Activated CD8-positive, alpha-beta T cell treated with anti-CD3 and anti-CD28 coated beads for 36 hours (primary cell): ENCODE measurements at regions of chr2 and their contacts with region 1.

Region 1: GRCh38 chr2:27663463-27664249 is at the starts of genes SLC4A1AP and SUPT7L:
- DNase-seq: peak; percentile 81
- ATAC-seq: peak; percentile 82
- H3K4me3 Mint-ChIP-seq: peak within 1 kb of the TSS; percentile 93
- H3K27ac Mint-ChIP-seq: peak within 1 kb of the TSS; percentile 100
- H3K4me1 Mint-ChIP-seq: peaks cover 50% of the 10 kb centered on the region
- H3K27me3 Mint-ChIP-seq: no peaks in the 10 kb centered on the region
- CTCF ChIP-seq: no peak
- total RNA-seq, gene SLC4A1AP: 19.1 to 19.3 TPM
- total RNA-seq, gene SUPT7L: 21.8 to 22.6 TPM

Region 2: DNA sequence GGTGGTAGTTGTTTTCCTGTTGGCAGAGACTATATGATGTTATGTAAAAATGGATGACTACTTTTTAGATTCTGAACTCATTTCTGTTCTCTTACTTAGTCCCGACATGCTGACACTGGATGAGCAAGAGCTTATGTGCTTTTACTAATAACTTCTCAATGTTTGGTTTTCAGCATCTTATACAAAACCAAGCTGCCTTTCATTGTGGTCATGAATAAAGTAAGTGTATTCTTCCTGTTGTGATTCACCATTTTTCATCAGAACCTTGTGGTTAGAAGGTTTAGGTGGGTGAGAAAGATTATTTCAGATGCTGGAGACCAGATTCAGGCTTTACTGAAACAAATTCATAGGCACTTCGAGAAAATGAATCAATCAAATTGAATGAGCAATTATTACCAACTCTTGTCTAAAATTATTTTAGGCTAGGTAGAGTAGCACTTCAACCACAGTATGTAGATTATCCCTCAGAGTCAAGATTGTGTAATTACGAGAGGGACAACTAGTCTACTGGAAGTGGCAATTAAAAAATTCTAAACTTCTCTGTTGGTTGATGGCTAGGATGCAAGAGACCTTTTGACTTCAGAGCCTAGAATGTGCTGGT is 25.5 kb before region 1 on chr2:
- CTCF ChIA-PET with region 1: no interaction called
- POLR2A ChIA-PET with region 1: interaction called, 13 read pairs
- intact Hi-C with region 1: no loop called
- DNase-seq: peak; percentile 33
- ATAC-seq: peak; percentile 89
- H3K4me3 Mint-ChIP-seq: peak overlapping the region; percentile 9
- H3K27ac Mint-ChIP-seq: peak overlapping the region; percentile 94
- H3K4me1 Mint-ChIP-seq: peaks cover 34% of the 10 kb centered on the region
- H3K27me3 Mint-ChIP-seq: no peaks in the 10 kb centered on the region
- CTCF ChIP-seq: no peak

Region 3: DNA sequence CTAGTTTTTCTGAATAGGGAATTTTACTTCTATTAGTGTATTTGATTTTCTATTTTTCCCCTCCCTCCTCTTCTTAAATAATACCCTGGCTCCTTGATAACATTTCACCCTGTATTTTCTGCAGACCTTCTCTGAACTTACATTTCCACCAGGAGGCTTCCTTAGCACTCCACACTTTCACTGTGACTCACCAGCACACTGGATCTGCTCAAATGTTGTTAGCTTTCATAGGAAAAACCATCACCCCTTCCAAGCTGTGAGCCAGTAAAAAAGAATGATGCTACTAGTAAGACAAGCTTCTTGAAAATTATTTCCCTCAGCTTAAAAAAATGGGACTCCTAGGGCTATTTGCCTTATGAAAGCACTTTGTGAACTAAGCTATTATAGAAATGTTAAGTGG is 16.4 kb before region 1 on chr2:
- CTCF ChIA-PET with region 1: interaction called, 5 read pairs
- POLR2A ChIA-PET with region 1: interaction called, 13 read pairs
- intact Hi-C with region 1: no loop called
- DNase-seq: no peak
- ATAC-seq: no peak
- H3K4me3 Mint-ChIP-seq: no peak overlapping the region
- H3K27ac Mint-ChIP-seq: no peak overlapping the region
- H3K4me1 Mint-ChIP-seq: no peaks in the 10 kb centered on the region
- H3K27me3 Mint-ChIP-seq: no peaks in the 10 kb centered on the region
- CTCF ChIP-seq: no peak

Region 4: GRCh38 chr2:27720004-27720551 is 56.4 kb after region 1 on chr2:
- CTCF ChIA-PET with region 1: no interaction called
- POLR2A ChIA-PET with region 1: no interaction called
- intact Hi-C with region 1: no loop called
- DNase-seq: peak; percentile 80
- ATAC-seq: peak; percentile 91
- H3K4me3 Mint-ChIP-seq: no peak overlapping the region
- H3K27ac Mint-ChIP-seq: no peak overlapping the region
- H3K4me1 Mint-ChIP-seq: peaks cover 39% of the 10 kb centered on the region
- H3K27me3 Mint-ChIP-seq: peaks cover 16% of the 10 kb centered on the region
- CTCF ChIP-seq: no peak

Region 5: DNA sequence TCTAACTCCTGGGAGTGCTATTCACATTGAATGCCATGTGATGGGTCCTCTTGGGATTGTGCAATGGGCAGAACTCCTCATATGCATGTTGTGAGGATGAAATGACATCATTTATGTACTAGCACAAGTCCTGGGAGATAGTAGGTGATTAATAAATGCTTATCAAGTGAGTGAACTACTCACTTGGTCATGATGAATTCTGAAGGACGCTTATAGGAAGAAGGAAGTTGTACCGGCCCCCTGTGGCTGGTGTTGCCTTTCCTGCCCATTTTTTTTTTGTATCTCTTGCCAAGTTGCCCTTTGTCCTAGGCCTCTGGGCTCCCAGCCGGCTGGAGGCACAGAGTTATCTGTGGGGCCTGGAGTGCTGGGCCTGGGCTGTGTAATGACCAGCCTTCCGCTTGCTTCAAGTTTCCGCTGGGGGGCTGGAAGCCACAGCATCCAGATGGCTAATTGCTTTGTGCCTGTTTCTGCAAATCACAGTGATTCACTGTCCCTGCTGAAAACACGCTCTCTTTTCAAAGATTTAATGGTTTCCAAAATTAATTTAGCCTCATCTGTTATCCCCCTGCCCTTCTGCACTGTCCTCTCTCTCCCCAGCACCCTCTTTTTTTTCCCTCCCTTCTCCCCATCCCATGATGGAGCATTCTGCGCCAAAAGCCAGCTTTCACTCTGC is 74.2 kb after region 1 on chr2:
- CTCF ChIA-PET with region 1: no interaction called
- POLR2A ChIA-PET with region 1: no interaction called
- intact Hi-C with region 1: no loop called
- DNase-seq: no peak
- ATAC-seq: no peak
- H3K4me3 Mint-ChIP-seq: no peak overlapping the region
- H3K27ac Mint-ChIP-seq: no peak overlapping the region
- H3K4me1 Mint-ChIP-seq: peaks cover 14% of the 10 kb centered on the region
- H3K27me3 Mint-ChIP-seq: no peaks in the 10 kb centered on the region
- CTCF ChIP-seq: no peak

Region 6: DNA sequence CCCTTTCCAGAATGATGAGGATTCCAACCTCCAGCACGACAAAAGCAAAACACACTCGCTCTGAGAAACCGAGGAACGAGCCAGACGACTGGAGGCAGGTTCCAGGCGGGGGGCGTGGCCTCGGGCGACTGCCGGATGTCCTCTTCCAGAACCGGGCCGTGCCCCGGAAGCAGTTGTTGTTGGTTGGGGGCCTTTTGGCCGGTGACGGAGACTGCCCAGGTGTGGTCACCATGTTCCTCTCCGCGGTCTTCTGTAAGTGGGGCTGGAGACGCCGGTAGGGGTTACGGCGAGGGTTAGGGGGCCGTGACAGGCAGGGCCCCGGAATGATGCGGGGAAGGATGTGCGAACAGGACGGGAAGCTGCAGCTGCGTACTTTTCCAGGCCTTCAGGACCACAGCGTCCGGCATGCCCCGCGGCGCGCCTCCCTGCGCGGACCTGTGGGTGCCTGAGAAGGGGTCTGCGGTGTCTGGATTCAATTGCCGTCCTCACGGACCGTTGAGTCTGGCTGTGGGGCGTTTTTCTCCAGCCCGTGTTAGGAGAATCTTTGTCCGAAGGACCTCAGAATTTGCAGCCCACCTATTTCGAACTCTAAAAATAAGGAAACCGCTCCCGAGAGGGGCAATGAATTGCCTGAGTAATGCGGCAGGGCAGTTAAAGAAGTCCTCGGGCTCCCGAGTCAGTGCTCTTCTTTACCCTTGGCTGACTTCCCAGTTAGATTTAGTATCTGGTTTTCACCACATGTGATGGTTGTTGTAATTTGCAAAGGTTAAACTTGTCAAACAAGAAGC is 108.1 kb after region 1 on chr2 and contains the start of gene MRPL33:
- CTCF ChIA-PET with region 1: no interaction called
- POLR2A ChIA-PET with region 1: no interaction called
- intact Hi-C with region 1: no loop called
- DNase-seq: peak; percentile 96
- ATAC-seq: peak; percentile 98
- H3K4me3 Mint-ChIP-seq: peak within 1 kb of the TSS; percentile 95
- H3K27ac Mint-ChIP-seq: peak within 1 kb of the TSS; percentile 98
- H3K4me1 Mint-ChIP-seq: peaks cover 36% of the 10 kb centered on the region
- H3K27me3 Mint-ChIP-seq: no peaks in the 10 kb centered on the region
- CTCF ChIP-seq: no peak
- total RNA-seq, gene MRPL33: 54.6 to 59.2 TPM